Activated T-helper 2 cell treated with anti-CD3 and anti-CD28 coated beads, Interferon-gamma antibody, Interleukin-2, Interleukin-4, amounts not matched to agents 10 μg/mL and 5 μg/mL and 100 μg/mL, durations not matched to agents 14 hours and 24 hours and 36 hours (primary cell): ENCODE measurements at regions of chr17 and their contacts with region 1.

Region 1: DNA sequence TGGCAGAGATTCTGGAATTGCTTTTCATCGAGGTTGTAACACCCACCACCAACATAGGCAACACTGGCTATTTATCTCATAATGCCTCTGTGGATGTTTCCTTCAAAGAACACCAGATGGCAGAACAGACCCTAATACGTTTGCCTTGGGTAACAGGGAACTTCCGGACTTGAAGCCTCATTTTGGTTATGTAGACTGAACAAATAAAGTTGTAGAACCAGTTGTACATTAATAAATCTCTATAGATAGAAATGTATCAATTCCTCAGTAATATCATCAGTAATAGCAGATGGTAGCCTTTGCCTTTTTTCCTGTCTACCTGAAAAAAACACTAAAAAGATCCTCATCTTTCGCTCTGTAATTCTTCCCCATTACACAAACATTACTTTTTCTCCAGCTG is 25.9 kb upstream of the APOH start:
- DNase-seq: peak; percentile 17
- H3K4me3 Mint-ChIP-seq: peak overlapping the region; percentile 42
- H3K27ac Mint-ChIP-seq: peak overlapping the region; percentile 43
- H3K4me1 Mint-ChIP-seq: peaks cover 23% of the 10 kb centered on the region
- H3K27me3 Mint-ChIP-seq: no peaks in the 10 kb centered on the region

Region 2: GRCh38 chr17:66165513-66166123 is 89.5 kb before region 1 on chr17:
- intact Hi-C with region 1: no loop called
- DNase-seq: no peak
- H3K4me3 Mint-ChIP-seq: no peak overlapping the region
- H3K27ac Mint-ChIP-seq: no peak overlapping the region
- H3K4me1 Mint-ChIP-seq: peaks cover 2% of the 10 kb centered on the region
- H3K27me3 Mint-ChIP-seq: peaks cover 9% of the 10 kb centered on the region

Region 3: DNA sequence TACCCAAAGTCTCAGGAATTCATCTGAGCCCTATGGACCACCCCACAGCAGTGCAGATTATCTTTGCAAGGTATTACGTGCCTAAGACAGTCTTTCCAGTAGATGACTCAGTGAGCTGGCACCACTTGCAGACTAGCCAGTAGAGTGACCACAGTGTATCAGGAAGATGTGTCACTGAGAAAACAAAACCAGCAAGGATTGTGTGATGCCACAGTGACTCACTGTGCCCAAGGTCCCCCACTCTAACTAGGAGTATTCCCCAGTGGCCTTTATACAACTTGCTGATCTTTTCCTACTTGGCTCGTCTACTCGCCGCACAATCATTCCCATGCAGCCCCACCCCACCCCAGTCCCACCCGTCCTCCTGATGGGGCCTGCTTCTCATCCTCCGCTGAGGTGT is 20.5 kb after region 1 on chr17:
- intact Hi-C with region 1: no loop called
- DNase-seq: no peak
- H3K4me3 Mint-ChIP-seq: no peak overlapping the region
- H3K27ac Mint-ChIP-seq: no peak overlapping the region
- H3K4me1 Mint-ChIP-seq: peaks cover 11% of the 10 kb centered on the region
- H3K27me3 Mint-ChIP-seq: peaks cover 7% of the 10 kb centered on the region

Region 4: DNA sequence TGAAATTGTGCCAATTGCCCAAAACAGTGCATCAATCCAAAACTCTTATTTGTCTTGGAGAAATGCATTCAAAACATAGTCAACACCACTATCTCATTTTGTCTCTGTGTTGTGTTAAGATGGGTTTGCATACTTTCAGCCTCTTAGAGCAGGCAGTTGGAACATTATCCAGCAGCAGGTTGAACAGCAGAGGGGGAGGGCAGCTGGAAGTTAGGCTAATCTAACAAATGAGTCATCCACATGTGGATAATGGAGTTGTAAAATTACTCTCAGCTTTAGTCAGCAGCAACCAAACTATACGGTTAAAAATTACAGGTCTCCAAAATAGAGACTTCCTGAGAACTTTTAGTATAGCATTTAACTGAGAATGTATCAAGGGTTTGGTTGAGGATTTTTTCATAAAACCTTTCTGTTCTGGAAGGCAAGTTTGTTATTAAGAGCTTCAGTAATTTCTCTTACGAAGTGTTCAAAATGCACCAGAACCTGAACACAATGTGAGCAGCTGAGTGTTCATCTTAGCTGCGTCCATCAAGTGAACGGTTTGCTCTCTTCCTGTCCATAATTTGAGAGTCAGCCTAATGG is 93.6 kb after region 1 on chr17:
- intact Hi-C with region 1: no loop called
- DNase-seq: no peak
- H3K4me3 Mint-ChIP-seq: peak overlapping the region; percentile 19
- H3K27ac Mint-ChIP-seq: peak overlapping the region; percentile 76
- H3K4me1 Mint-ChIP-seq: peaks cover 76% of the 10 kb centered on the region
- H3K27me3 Mint-ChIP-seq: no peaks in the 10 kb centered on the region

Region 5: GRCh38 chr17:66426397-66427033 is 171.4 kb after region 1 on chr17:
- intact Hi-C with region 1: loop called (anchors 1 kb)
- DNase-seq: peak; percentile 40
- H3K4me3 Mint-ChIP-seq: peak overlapping the region; percentile 14
- H3K27ac Mint-ChIP-seq: peak overlapping the region; percentile 62
- H3K4me1 Mint-ChIP-seq: peaks cover 70% of the 10 kb centered on the region
- H3K27me3 Mint-ChIP-seq: no peaks in the 10 kb centered on the region

Region 6: DNA sequence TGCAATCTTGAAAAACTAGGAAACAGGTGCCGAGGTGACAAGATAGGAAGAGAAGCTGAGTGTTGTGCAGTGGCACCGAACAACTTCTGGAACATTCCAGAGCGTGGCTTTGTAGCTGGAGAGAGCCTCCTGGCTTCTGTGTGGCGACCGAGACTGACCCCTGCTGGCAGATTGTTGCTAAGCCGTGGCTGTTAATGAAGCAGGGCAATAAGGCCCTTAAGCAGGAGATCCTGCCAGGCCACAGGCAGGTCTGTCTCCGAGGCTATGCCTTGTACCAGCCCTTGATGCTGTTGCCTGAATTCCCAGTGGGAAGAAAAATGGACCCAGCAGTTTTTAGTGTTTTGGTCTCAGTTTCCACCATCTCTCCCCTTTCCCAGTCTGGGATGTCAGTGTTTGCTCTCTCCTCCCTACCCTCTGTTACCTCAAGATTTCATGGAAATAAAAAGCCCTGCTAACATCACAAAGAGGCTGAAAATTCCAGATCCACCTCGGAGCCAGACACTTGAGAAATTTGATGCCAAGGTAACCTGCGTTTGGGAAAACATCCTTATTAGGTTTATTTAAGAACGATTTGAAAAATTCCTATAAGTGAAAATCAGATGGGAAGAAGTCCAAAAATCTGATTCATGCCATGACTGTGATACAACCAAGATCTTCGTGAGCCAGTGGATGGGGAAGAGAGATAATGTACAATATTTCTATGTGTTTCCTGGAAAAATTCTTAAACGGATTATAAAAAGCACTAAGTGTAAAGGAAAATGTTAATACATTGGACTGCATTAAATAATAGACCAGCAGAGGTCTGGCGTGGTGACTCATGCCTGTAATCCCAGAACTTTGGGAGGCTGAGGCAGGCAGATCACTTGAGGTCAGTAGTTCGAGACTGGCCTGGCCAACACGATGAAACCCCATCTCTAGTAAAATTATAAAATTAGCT is 312.4 kb after region 1 on chr17:
- intact Hi-C with region 1: loop called (anchors 1 kb)
- DNase-seq: peak; percentile 61
- H3K4me3 Mint-ChIP-seq: no peak overlapping the region
- H3K27ac Mint-ChIP-seq: peak overlapping the region; percentile 59
- H3K4me1 Mint-ChIP-seq: peaks cover 27% of the 10 kb centered on the region
- H3K27me3 Mint-ChIP-seq: no peaks in the 10 kb centered on the region

Region 7: GRCh38 chr17:66673668-66674315 is 418.7 kb after region 1 on chr17:
- intact Hi-C with region 1: loop called (anchors 2 kb)
- DNase-seq: no peak
- H3K4me3 Mint-ChIP-seq: no peak overlapping the region
- H3K27ac Mint-ChIP-seq: peak overlapping the region; percentile 62
- H3K4me1 Mint-ChIP-seq: peaks cover 49% of the 10 kb centered on the region
- H3K27me3 Mint-ChIP-seq: no peaks in the 10 kb centered on the region

Region 8: GRCh38 chr17:66906321-66907278 is 651.5 kb after region 1 on chr17:
- intact Hi-C with region 1: loop called (anchors 2 kb)
- DNase-seq: peak; percentile 46
- H3K4me3 Mint-ChIP-seq: no peak overlapping the region
- H3K27ac Mint-ChIP-seq: no peak overlapping the region
- H3K4me1 Mint-ChIP-seq: peaks cover 5% of the 10 kb centered on the region
- H3K27me3 Mint-ChIP-seq: peaks cover 6% of the 10 kb centered on the region